Naive thymus-derived CD4-positive, alpha-beta T cell (primary cell): ENCODE measurements at regions of chr12 and their contacts with region 1.

Region 1: GRCh38 chr12:113921430-113921829 is 44.7 kb downstream of the RBM19 start:
- DNase-seq: no peak
- ATAC-seq: no peak
- H3K4me3 ChIP-seq: no peak overlapping the region
- H3K4me3 Mint-ChIP-seq: no peak overlapping the region
- H3K27ac ChIP-seq: no peak overlapping the region
- H3K27ac Mint-ChIP-seq: no peak overlapping the region
- H3K4me1 ChIP-seq: no peaks in the 10 kb centered on the region
- H3K4me1 Mint-ChIP-seq: peaks cover 0 to 5% (median 0%) of the 10 kb centered on the region in 7 donors
- H3K27me3 ChIP-seq: no peaks in the 10 kb centered on the region
- H3K27me3 Mint-ChIP-seq: no peaks in the 10 kb centered on the region

Region 2: DNA sequence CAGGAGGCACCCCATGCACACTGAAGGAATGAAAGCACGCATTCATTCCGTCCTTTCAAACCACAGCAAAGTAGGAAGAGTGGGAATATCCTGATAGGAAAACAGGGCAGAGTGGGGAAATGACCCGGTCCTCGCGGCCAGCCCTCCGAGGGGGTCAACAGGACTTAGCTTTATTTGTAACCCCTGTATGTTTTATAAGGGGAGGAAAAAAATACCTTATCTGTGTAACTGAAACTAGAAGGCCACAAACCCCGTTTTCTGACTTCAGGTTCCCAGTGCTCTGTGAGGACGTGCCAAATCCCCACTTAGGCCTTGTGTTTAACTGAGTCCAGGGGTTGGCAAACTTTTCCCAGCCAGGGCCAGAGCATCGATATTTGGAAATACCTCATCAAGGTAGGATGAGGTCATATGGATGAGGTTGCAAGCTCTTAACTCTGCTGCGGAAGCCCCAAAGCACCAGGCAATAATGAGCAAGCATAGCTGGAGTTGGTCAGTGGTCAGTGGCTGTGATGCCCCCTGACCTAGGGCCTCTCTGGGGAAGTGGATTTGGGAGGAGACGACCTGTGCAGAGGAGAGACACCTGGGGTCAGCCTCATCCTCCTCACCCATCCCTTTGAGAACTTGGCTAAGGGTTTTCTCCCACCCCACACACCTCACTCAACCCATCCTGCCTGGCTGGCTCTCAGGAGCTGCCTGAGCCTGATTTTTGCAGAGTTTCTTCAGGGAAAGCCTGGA is 13.8 kb before region 1 on chr12:
- CTCF ChIA-PET with region 1: interaction called, 3 read pairs
- POLR2A ChIA-PET with region 1: no interaction called
- intact Hi-C with region 1: loop called in 1 of 2 experiments (anchors 1 kb)
- DNase-seq: no peak
- ATAC-seq: no peak
- H3K4me3 ChIP-seq: no peak overlapping the region
- H3K4me3 Mint-ChIP-seq: no peak overlapping the region
- H3K27ac ChIP-seq: no peak overlapping the region
- H3K27ac Mint-ChIP-seq: no peak overlapping the region
- H3K4me1 ChIP-seq: no peaks in the 10 kb centered on the region
- H3K4me1 Mint-ChIP-seq: peaks cover 0 to 4% (median 0%) of the 10 kb centered on the region in 7 donors
- H3K27me3 ChIP-seq: no peaks in the 10 kb centered on the region
- H3K27me3 Mint-ChIP-seq: no peaks in the 10 kb centered on the region